CD8-positive, alpha-beta T cell (primary cell): ENCODE measurements at regions of chr5 and their contacts with region 1.

Region 1: GRCh38 chr5:181223058-181223728 is at the start of gene TRIM41:
- DNase-seq: peak; percentile 93 to 99 (median 98)
- ATAC-seq: peak; percentile 60
- H3K4me3 ChIP-seq: peak within 1 kb of the TSS; percentile 84 to 95
- H3K4me3 Mint-ChIP-seq: peak within 1 kb of the TSS; percentile 94
- H3K27ac ChIP-seq: peak within 1 kb of the TSS; percentile 91 to 100
- H3K27ac Mint-ChIP-seq: peak within 1 kb of the TSS; percentile 98
- H3K4me1 ChIP-seq: peaks cover 37% of the 10 kb centered on the region
- H3K4me1 Mint-ChIP-seq: peaks cover 57% of the 10 kb centered on the region
- H3K27me3 ChIP-seq: no peaks in the 10 kb centered on the region
- H3K27me3 Mint-ChIP-seq: no peaks in the 10 kb centered on the region
- CTCF ChIP-seq: no peak
- total RNA-seq, gene TRIM41: 20.9 to 22.2 TPM

Region 2: DNA sequence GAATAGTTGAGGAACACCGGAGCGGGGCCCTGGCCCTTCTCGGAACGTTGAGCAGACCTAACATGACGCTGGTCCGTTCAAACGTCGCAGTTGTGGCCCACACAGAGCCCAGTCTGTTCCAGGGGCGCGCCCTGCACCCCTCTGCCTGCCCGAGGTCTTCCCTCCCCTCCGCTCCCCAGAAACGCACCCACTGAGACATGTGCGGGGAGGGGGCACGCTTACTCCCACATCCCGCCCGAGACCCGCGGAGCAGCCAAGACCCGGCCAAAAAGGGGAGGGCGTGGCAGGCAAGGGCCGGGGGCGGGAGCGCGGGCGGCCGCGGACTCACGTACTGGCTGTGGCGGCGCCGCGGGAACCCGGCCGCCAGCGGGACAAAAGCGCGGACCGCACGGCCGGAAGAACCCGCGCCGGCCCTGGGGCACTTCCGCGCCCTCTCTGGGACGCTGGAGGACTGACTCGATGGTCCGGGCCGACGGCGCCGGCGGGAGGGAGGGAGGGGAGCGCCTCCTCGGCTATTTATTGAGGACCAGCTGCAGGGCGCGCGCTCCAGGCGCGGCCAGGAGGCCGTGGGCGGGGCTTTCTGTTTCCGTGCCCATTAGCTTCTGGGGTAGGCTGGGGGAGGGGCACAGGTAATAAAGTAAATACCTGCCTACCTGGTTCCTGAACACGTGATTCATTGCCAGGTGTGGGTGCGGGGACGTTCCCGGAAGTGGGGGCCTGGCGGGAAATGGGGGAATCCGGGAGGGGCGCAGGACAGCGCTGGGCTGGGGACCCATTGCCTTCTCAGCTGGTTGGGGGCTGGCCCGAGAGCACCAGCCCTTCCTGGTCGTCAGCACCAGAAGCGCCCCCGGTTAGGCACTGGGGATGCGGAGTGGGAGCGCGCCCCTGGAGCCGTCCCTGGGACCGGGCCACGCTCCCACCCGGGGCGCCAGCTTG is 362.0 kb before region 1 on chr5 and contains the start of gene ZFP62:
- CTCF ChIA-PET with region 1: no interaction called
- POLR2A ChIA-PET with region 1: no interaction called
- intact Hi-C with region 1: loop called (anchors 1 to 2 kb)
- DNase-seq: peak; percentile 81 to 94 (median 86)
- ATAC-seq: peak; percentile 71
- H3K4me3 ChIP-seq: peak within 1 kb of the TSS; percentile 79 to 86
- H3K4me3 Mint-ChIP-seq: peak within 1 kb of the TSS; percentile 94
- H3K27ac ChIP-seq: peak within 1 kb of the TSS; percentile 65 to 85
- H3K27ac Mint-ChIP-seq: peak within 1 kb of the TSS; percentile 96
- H3K4me1 ChIP-seq: no peaks in the 10 kb centered on the region
- H3K4me1 Mint-ChIP-seq: peaks cover 29% of the 10 kb centered on the region
- H3K27me3 ChIP-seq: no peaks in the 10 kb centered on the region
- H3K27me3 Mint-ChIP-seq: no peaks in the 10 kb centered on the region
- CTCF ChIP-seq: peak; percentile 8
- total RNA-seq, gene ZFP62: 13.7 to 13.9 TPM

Region 3: GRCh38 chr5:181191529-181192394 is 31.4 kb before region 1 on chr5:
- CTCF ChIA-PET with region 1: interaction called, 23 read pairs
- POLR2A ChIA-PET with region 1: interaction called, 84 read pairs
- intact Hi-C with region 1: loop called (anchors 1 kb)
- DNase-seq: peak; percentile 90 to 99 (median 96)
- ATAC-seq: peak; percentile 50
- H3K4me3 ChIP-seq: peak overlapping the region; percentile 88 to 90
- H3K4me3 Mint-ChIP-seq: peak overlapping the region; percentile 98
- H3K27ac ChIP-seq: peak overlapping the region; percentile 74 to 78
- H3K27ac Mint-ChIP-seq: peak overlapping the region; percentile 95
- H3K4me1 ChIP-seq: peaks cover 7% of the 10 kb centered on the region
- H3K4me1 Mint-ChIP-seq: peaks cover 23% of the 10 kb centered on the region
- H3K27me3 ChIP-seq: no peaks in the 10 kb centered on the region
- H3K27me3 Mint-ChIP-seq: no peaks in the 10 kb centered on the region
- CTCF ChIP-seq: no peak

Region 4: DNA sequence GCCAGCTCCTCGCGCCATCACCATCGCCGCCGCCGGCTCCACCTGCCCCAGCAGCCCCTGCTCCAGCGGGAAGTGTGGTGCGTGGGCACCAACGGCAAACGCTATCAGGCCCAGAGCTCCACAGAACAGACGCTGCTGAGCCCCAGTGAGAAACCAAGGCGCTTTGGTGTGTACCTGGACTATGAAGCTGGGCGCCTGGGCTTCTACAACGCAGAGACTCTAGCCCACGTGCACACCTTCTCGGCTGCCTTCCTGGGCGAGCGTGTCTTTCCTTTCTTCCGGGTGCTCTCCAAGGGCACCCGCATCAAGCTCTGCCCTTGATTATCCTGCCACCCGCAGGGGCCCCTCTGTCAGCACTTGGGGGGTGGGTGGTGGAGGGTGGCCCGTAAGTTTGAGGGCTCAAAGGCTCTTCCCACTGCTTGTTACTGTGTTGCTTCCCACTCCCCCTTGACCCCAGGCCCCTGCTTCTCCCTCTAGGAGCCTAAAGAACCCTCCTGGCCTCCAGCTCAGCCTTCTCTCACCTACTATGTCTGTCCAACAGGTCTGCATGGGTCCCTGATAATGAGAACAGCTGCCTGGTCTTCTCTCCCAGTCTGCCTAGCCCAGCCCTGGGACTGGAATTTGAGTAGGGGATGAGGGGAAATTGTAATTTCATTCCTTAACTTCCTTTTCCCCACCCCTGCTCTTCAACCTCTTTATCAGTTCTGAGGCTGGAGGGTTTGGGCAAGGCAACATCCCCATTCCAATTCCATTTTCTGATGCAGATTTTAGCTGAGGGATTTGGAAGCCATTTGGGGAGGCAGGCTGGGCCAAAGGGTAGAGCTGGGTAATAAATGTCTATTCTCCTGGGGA is 11.5 kb after region 1 on chr5:
- CTCF ChIA-PET with region 1: no interaction called
- POLR2A ChIA-PET with region 1: interaction called, 17 read pairs
- intact Hi-C with region 1: no loop called
- DNase-seq: no peak
- ATAC-seq: no peak
- H3K4me3 ChIP-seq: no peak overlapping the region
- H3K4me3 Mint-ChIP-seq: no peak overlapping the region
- H3K27ac ChIP-seq: no peak overlapping the region
- H3K27ac Mint-ChIP-seq: no peak overlapping the region
- H3K4me1 ChIP-seq: peaks cover 3% of the 10 kb centered on the region
- H3K4me1 Mint-ChIP-seq: peaks cover 38% of the 10 kb centered on the region
- H3K27me3 ChIP-seq: no peaks in the 10 kb centered on the region
- H3K27me3 Mint-ChIP-seq: no peaks in the 10 kb centered on the region
- CTCF ChIP-seq: no peak